Naive thymus-derived CD8-positive, alpha-beta T cell (primary cell): ENCODE measurements at regions of chr1 and their contacts with region 1.

Region 1: GRCh38 chr1:31984419-31985347 is 29.0 kb upstream of the KHDRBS1 start:
- DNase-seq: peak in 3 of 10 donors; percentile 21 to 34 (median 23)
- ATAC-seq: peak; percentile 41 to 78
- H3K4me3 Mint-ChIP-seq: peak overlapping the region in 9 of 10 donors; percentile 30 to 74 (median 65)
- H3K27ac Mint-ChIP-seq: peak overlapping the region; percentile 64 to 94 (median 92)
- H3K4me1 Mint-ChIP-seq: peaks cover 24 to 63% (median 55%) of the 10 kb centered on the region in 4 donors
- H3K27me3 Mint-ChIP-seq: no peaks in the 10 kb centered on the region

Region 2: GRCh38 chr1:32005522-32005921 is 20.8 kb after region 1 on chr1:
- POLR2A ChIA-PET with region 1: interaction called, 13 read pairs
- DNase-seq: no peak
- ATAC-seq: no peak
- H3K4me3 Mint-ChIP-seq: no peak overlapping the region
- H3K27ac Mint-ChIP-seq: peak overlapping the region in 1 of 10 donors; percentile 57
- H3K4me1 Mint-ChIP-seq: peaks cover 5 to 14% (median 7%) of the 10 kb centered on the region in 4 donors
- H3K27me3 Mint-ChIP-seq: no peaks in the 10 kb centered on the region

Region 3: DNA sequence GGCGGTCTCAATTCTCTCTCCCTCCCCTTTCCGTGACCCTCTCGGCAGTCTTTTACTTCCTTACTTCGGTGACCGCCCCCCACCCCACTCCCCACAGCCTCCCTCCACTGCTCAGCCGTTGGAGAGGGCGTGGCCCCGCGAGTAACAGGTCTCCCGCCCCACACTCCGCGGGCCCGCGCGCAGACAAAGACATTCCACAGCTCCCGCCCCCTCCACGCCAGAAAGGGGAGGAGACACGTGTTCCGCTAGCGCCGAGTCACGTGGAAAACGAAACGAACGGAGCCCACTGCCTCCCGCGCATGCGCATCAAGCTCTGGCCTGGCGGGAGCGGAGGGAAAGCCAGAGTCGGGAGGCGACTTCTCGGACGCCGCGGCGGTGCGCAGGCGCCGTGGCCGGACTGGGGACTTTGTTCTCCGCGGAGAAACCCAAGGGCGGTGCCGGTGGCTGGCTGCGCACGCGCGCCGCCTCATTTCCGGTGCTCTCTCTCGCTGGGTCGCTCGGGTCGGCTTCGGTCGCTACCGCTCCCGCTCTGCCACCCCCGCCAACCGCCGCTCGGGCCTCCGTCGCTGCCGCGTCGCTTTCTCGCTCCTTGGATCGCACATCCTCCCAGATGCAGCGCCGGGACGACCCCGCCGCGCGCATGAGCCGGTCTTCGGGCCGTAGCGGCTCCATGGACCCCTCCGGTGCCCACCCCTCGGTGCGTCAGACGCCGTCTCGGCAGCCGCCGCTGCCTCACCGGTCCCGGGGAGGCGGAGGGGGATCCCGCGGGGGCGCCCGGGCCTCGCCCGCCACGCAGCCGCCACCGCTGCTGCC is 28.9 kb after region 1 on chr1 and contains the start of gene KHDRBS1:
- POLR2A ChIA-PET with region 1: interaction called, 10 read pairs
- DNase-seq: peak; percentile 92 to 99 (median 97)
- ATAC-seq: peak; percentile 83 to 85
- H3K4me3 Mint-ChIP-seq: peak within 1 kb of the TSS; percentile 91 to 99 (median 97)
- H3K27ac Mint-ChIP-seq: peak within 1 kb of the TSS; percentile 94 to 100 (median 97)
- H3K4me1 Mint-ChIP-seq: peaks cover 19 to 41% (median 37%) of the 10 kb centered on the region in 4 donors
- H3K27me3 Mint-ChIP-seq: peaks cover 0 to 2% (median 0%) of the 10 kb centered on the region in 5 donors
- polyA plus RNA-seq, gene KHDRBS1: 92.1 to 115 (median 99.2) TPM

Region 4: GRCh38 chr1:32031578-32032274 is 47.0 kb after region 1 on chr1:
- POLR2A ChIA-PET with region 1: no interaction called
- DNase-seq: no peak
- ATAC-seq: no peak
- H3K4me3 Mint-ChIP-seq: no peak overlapping the region
- H3K27ac Mint-ChIP-seq: peak overlapping the region in 4 of 10 donors; percentile 31 to 58 (median 40)
- H3K4me1 Mint-ChIP-seq: peaks cover 20 to 69% (median 57%) of the 10 kb centered on the region in 4 donors
- H3K27me3 Mint-ChIP-seq: no peaks in the 10 kb centered on the region